Natural killer cell (primary cell): ENCODE measurements at regions of chr11 and their contacts with region 1.

Region 1: GRCh38 chr11:96054870-96055705 is 131.2 kb upstream of the MTMR2 start:
- DNase-seq: peak in 1 of 2 donors; percentile 59
- ATAC-seq: peak; percentile 54 to 65 (median 62)
- H3K4me3 ChIP-seq: no peak overlapping the region
- H3K4me3 Mint-ChIP-seq: no peak overlapping the region
- H3K27ac ChIP-seq: no peak overlapping the region
- H3K27ac Mint-ChIP-seq: no peak overlapping the region
- H3K4me1 ChIP-seq: no peaks in the 10 kb centered on the region
- H3K4me1 Mint-ChIP-seq: peaks cover 5% of the 10 kb centered on the region in 2 donors
- H3K27me3 ChIP-seq: no peaks in the 10 kb centered on the region
- H3K27me3 Mint-ChIP-seq: no peaks in the 10 kb centered on the region
- CTCF ChIP-seq: peak; percentile 66

Region 2: DNA sequence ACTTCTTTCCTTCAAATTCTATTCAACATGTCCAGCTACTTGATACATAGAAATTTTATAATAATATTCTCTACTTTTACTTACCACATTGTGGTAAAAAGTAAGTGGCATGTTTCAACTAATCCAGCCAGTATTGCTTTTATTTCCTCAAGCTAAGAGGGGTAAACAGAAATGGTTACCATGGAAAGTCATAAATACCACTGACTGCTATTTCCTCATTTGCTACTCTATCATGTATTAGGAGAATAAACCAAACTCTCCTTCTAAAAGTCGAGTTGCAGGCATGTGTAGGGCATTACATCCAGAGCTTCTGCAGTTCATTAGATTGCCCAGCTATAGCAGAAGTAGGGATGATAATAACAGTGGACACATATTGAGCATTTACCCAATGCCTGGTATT is 79.5 kb after region 1 on chr11:
- intact Hi-C with region 1: no loop called
- DNase-seq: peak in 1 of 2 donors; percentile 54
- ATAC-seq: peak; percentile 30 to 73 (median 52)
- H3K4me3 ChIP-seq: no peak overlapping the region
- H3K4me3 Mint-ChIP-seq: no peak overlapping the region
- H3K27ac ChIP-seq: peak overlapping the region; percentile 35
- H3K27ac Mint-ChIP-seq: peak overlapping the region; percentile 21 to 63
- H3K4me1 ChIP-seq: peaks cover 4% of the 10 kb centered on the region
- H3K4me1 Mint-ChIP-seq: peaks cover 30% of the 10 kb centered on the region in 2 donors
- H3K27me3 ChIP-seq: no peaks in the 10 kb centered on the region
- H3K27me3 Mint-ChIP-seq: no peaks in the 10 kb centered on the region
- CTCF ChIP-seq: no peak

Region 3: GRCh38 chr11:96242971-96243647 is 188.0 kb after region 1 on chr11:
- intact Hi-C with region 1: loop called (anchors 10 kb)
- DNase-seq: peak; percentile 53 to 85
- ATAC-seq: peak; percentile 87 to 89 (median 88)
- H3K4me3 ChIP-seq: peak overlapping the region; percentile 64
- H3K4me3 Mint-ChIP-seq: peak overlapping the region; percentile 87
- H3K27ac ChIP-seq: peak overlapping the region; percentile 69
- H3K27ac Mint-ChIP-seq: peak overlapping the region; percentile 80 to 89
- H3K4me1 ChIP-seq: peaks cover 17% of the 10 kb centered on the region
- H3K4me1 Mint-ChIP-seq: peaks cover 27 to 29% of the 10 kb centered on the region in 2 donors
- H3K27me3 ChIP-seq: no peaks in the 10 kb centered on the region
- H3K27me3 Mint-ChIP-seq: no peaks in the 10 kb centered on the region
- CTCF ChIP-seq: no peak

Region 4: DNA sequence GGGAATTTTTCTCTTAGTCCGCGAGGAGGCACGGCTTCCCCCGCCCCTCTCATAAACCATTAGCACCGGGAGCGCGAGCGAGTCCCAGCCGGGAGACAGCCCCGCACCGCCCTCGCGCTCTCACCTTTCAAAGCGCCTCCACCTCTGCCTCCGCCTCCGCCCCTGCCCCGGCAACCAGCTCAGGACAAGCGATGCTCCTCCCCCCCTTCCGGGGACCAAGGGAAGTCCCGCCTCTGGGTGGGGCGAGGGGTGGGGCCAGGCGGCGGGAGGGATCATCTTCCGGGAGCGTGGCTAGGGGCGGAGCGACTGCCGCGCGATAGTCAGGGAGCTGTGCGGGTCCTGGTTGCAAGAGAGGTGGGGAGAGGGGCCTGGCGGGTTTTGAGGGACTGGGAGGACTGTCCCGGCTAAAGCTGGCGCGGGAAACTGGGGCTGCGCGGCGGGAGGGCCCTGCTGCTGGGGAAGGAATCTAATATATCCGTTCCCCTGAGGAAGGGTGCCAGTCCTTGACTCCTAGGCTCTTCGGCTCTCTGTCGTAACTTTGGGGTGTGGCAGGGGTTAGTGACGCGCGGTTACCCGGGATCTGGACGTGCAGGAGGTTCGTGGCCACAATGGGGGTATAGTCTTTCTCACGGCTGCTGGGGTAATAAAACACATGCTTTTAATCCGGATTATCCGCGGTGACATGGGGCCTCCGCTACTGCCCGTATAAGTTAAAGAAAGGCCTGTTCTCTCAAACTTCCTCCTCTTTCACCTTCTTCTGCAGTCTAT is 334.8 kb after region 1 on chr11 and contains the starts of genes CCDC82 and JRKL:
- intact Hi-C with region 1: loop called (anchors 2 kb)
- DNase-seq: peak; percentile 97
- ATAC-seq: peak; percentile 96 to 99 (median 97)
- H3K4me3 ChIP-seq: peak within 1 kb of the TSS; percentile 82
- H3K4me3 Mint-ChIP-seq: peak within 1 kb of the TSS; percentile 95
- H3K27ac ChIP-seq: peak within 1 kb of the TSS; percentile 89
- H3K27ac Mint-ChIP-seq: peak within 1 kb of the TSS; percentile 75 to 95
- H3K4me1 ChIP-seq: peaks cover 8% of the 10 kb centered on the region
- H3K4me1 Mint-ChIP-seq: peaks cover 35 to 54% of the 10 kb centered on the region in 2 donors
- H3K27me3 ChIP-seq: no peaks in the 10 kb centered on the region
- H3K27me3 Mint-ChIP-seq: no peaks in the 10 kb centered on the region
- CTCF ChIP-seq: no peak
- total RNA-seq, gene CCDC82: 36.2 to 42.1 (median 38.0) TPM
- total RNA-seq, gene JRKL: 4.5 to 6.1 (median 5.5) TPM